ENCODE measurements at regions of chr5 and their contacts with region 1.

Region 1: DNA sequence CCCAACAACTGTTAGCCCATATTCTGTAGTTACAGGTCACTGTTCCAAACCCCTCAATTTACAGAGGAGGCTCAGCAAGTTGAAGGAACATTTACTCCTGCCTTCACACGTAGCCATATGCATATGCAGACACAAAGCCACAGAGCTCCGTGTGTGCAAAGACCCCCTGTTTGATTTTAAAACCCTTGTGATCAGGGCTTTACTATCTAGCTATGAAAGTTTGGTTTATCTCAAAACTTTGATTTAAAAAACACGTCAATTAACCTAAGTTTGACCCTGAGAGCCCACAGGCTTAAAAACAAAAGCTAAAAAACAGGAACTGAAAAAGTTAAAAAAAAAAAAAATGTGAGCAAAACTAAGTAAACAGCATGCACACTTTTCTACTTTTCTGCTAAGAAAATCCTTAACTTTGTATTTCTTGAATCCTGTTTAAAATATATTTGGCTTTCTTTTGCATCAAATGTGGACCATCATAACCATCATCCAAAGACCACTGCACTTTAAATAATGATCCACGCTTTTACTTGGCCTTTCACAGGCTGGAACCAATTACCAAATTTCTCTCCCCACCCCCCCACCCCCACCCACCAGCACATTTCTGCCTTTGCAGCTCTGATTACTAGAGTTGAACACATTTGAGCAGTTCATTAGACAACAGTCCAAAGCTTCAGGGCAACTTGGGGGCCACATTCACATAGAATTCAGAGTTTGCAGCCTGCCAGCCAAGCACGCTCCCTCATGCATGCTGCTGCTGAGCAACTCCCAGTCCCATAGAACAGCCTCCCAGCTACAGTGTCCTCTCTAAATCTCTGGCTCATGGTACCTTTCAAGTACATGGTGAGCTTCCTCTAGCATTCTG is 128.8 kb upstream of the MAP3K1 start:
- DNase-seq: peak; percentile 82
- ATAC-seq: peak; percentile 78
- H3K4me3 ChIP-seq: peak overlapping the region in 1 of 5 experiments; percentile 33
- H3K4me3 Mint-ChIP-seq: peak overlapping the region; percentile 74
- H3K27ac ChIP-seq: peak overlapping the region; percentile 93 to 97
- H3K27ac Mint-ChIP-seq: peak overlapping the region; percentile 95
- H3K4me1 ChIP-seq: peaks cover 93% of the 10 kb centered on the region in 2 donors
- H3K4me1 Mint-ChIP-seq: peaks cover 94% of the 10 kb centered on the region
- H3K27me3 ChIP-seq: no peaks in the 10 kb centered on the region
- H3K27me3 Mint-ChIP-seq: no peaks in the 10 kb centered on the region
- CTCF ChIP-seq: no peak

Region 2: GRCh38 chr5:56565644-56566043 is 120.9 kb before region 1 on chr5:
- CTCF ChIA-PET with region 1: interaction called, 11 read pairs
- POLR2A ChIA-PET with region 1: interaction called, 5 read pairs
- intact Hi-C with region 1: loop called (anchors 5 kb)
- DNase-seq: peak; percentile 82
- ATAC-seq: peak; percentile 97
- H3K4me3 ChIP-seq: peak overlapping the region in 3 of 5 experiments; percentile 6 to 20 (median 9)
- H3K4me3 Mint-ChIP-seq: peak overlapping the region; percentile 56
- H3K27ac ChIP-seq: no peak overlapping the region
- H3K27ac Mint-ChIP-seq: peak overlapping the region; percentile 69
- H3K4me1 ChIP-seq: peaks cover 34 to 35% of the 10 kb centered on the region in 2 donors
- H3K4me1 Mint-ChIP-seq: peaks cover 41% of the 10 kb centered on the region
- H3K27me3 ChIP-seq: no peaks in the 10 kb centered on the region
- H3K27me3 Mint-ChIP-seq: no peaks in the 10 kb centered on the region
- CTCF ChIP-seq: no peak

Region 3: GRCh38 chr5:56670118-56670483 is 16.5 kb before region 1 on chr5:
- CTCF ChIA-PET with region 1: interaction called, 31 read pairs
- POLR2A ChIA-PET with region 1: interaction called, 62 read pairs
- intact Hi-C with region 1: loop called (anchors 1 kb)
- DNase-seq: peak; percentile 95
- ATAC-seq: no peak
- H3K4me3 ChIP-seq: no peak overlapping the region
- H3K4me3 Mint-ChIP-seq: peak overlapping the region; percentile 75
- H3K27ac ChIP-seq: peak overlapping the region; percentile 97 to 98
- H3K27ac Mint-ChIP-seq: peak overlapping the region; percentile 97
- H3K4me1 ChIP-seq: peaks cover 58% of the 10 kb centered on the region in 2 donors
- H3K4me1 Mint-ChIP-seq: peaks cover 74% of the 10 kb centered on the region
- H3K27me3 ChIP-seq: no peaks in the 10 kb centered on the region
- H3K27me3 Mint-ChIP-seq: no peaks in the 10 kb centered on the region
- CTCF ChIP-seq: no peak

Region 4: GRCh38 chr5:56729488-56729887 is 42.9 kb after region 1 on chr5:
- CTCF ChIA-PET with region 1: interaction called, 3 read pairs
- POLR2A ChIA-PET with region 1: interaction called, 4 read pairs
- intact Hi-C with region 1: loop called (anchors 2 kb)
- DNase-seq: peak; percentile 81
- ATAC-seq: peak; percentile 74
- H3K4me3 ChIP-seq: no peak overlapping the region
- H3K4me3 Mint-ChIP-seq: peak overlapping the region; percentile 36
- H3K27ac ChIP-seq: peak overlapping the region; percentile 74 to 90
- H3K27ac Mint-ChIP-seq: peak overlapping the region; percentile 89
- H3K4me1 ChIP-seq: peaks cover 56 to 57% of the 10 kb centered on the region in 2 donors
- H3K4me1 Mint-ChIP-seq: peaks cover 65% of the 10 kb centered on the region
- H3K27me3 ChIP-seq: no peaks in the 10 kb centered on the region
- H3K27me3 Mint-ChIP-seq: no peaks in the 10 kb centered on the region
- CTCF ChIP-seq: no peak

Region 5: DNA sequence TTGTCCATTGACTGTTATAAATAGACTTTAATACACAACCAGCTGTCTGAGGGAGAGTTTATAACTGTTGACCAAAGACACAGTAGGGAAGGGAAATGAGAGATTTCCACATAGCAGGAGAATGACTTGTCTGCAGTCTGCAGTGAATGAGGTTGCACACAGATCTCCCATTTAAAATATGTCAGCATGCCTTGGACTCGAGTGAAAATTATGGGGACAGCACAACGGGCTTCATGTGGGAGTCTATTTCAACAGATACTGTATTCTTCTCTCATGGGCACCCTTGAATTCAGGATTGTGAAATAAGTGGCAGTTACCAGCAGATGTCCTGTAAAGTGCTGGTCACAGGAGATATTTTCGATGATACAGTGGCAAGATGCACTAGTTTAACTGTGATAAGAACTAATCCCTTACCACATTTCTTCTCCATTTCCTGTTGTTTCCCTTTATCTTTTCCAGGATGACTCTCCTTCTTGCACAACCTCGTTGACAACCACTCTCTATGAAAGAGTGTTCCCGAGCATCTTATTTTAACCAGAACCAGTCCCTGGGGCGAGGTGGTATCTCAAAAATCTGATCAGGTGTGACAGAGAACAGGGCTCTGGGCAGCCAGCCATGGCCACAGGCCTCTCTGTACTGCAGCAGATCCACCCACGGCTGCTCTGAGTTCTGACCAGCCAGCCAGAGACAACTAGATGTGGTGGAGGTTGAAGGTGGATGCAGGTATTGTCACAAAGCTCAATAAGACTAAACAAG is 77.3 kb after region 1 on chr5:
- CTCF ChIA-PET with region 1: no interaction called
- POLR2A ChIA-PET with region 1: no interaction called
- intact Hi-C with region 1: loop called (anchors 1 kb)
- DNase-seq: peak; percentile 66
- ATAC-seq: peak; percentile 87
- H3K4me3 ChIP-seq: peak overlapping the region in 1 of 5 experiments; percentile 0
- H3K4me3 Mint-ChIP-seq: peak overlapping the region; percentile 52
- H3K27ac ChIP-seq: peak overlapping the region; percentile 56 to 60
- H3K27ac Mint-ChIP-seq: peak overlapping the region; percentile 61
- H3K4me1 ChIP-seq: peaks cover 63 to 69% of the 10 kb centered on the region in 2 donors
- H3K4me1 Mint-ChIP-seq: peaks cover 70% of the 10 kb centered on the region
- H3K27me3 ChIP-seq: no peaks in the 10 kb centered on the region
- H3K27me3 Mint-ChIP-seq: no peaks in the 10 kb centered on the region
- CTCF ChIP-seq: no peak

Region 6: DNA sequence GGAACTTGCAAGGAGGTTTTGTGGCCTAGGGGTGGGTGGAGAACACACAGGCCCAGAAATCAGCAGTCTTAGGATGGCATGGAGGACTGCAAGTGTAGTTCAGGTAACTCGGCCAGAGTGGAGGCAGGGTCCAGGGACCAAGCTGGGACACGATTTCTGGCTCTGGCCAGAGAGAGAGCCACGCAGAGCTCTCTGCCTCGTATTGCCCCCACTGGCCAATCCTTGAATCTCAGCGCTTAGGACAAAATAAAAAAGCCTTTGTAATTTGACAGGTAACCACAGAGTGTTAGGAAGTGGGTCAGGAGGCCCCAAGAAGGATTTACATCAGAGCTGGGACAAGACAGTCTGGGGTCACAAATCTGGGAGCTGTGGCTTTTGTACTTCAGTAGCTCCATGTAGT is 140.5 kb after region 1 on chr5:
- CTCF ChIA-PET with region 1: interaction called, 8 read pairs
- POLR2A ChIA-PET with region 1: interaction called, 10 read pairs
- intact Hi-C with region 1: no loop called
- DNase-seq: peak; percentile 51
- ATAC-seq: no peak
- H3K4me3 ChIP-seq: no peak overlapping the region
- H3K4me3 Mint-ChIP-seq: peak overlapping the region; percentile 63
- H3K27ac ChIP-seq: peak overlapping the region; percentile 15 to 85
- H3K27ac Mint-ChIP-seq: peak overlapping the region; percentile 82
- H3K4me1 ChIP-seq: peaks cover 83 to 96% of the 10 kb centered on the region in 2 donors
- H3K4me1 Mint-ChIP-seq: peaks cover 89% of the 10 kb centered on the region
- H3K27me3 ChIP-seq: no peaks in the 10 kb centered on the region
- H3K27me3 Mint-ChIP-seq: no peaks in the 10 kb centered on the region
- CTCF ChIP-seq: peak; percentile 44

Measured in B cell (primary cell).